ENCODE measurements at regions of chr12 and their contacts with region 1.

Region 1: DNA sequence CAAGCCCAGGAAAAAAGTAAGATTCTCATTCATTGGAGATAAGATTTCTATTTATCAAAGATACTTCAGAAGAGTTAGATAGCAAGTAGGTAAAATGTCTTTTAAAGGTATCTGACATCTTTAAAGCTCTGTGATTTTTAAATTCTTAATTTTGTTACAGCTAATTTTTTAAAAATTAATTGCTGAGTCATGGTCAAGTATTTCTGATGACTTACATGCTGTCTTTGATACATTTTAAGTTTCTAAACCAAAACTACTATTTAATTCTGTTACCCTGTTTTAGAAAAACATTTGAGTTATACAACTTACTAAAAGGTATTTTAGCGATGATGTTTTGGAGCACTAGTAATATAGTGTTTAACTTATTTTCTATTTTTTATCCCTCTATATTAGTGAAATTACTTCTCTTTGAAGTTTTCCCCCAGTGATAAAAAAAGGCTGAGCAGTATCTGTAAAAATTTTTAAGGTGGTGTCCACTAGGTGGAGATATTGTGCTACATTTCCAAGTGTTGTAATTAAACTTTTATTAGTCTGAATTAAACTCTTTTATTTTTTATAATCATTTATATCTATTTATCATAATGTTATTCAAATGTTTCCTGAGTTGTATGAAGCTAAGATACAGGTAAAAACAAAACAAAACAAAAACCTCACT is 11.5 kb downstream of the ALG10 start:
- DNase-seq: peak; percentile 12
- ATAC-seq: no peak
- H3K4me3 ChIP-seq: no peak overlapping the region
- H3K27ac ChIP-seq: no peak overlapping the region
- H3K4me1 ChIP-seq: no peaks in the 10 kb centered on the region
- H3K27me3 ChIP-seq: no peaks in the 10 kb centered on the region
- CTCF ChIP-seq: peak; percentile 26; the same call in 1 of the 2 replicates
- EP300 ChIP-seq: no peak
- POLR2A ChIP-seq: no peak
- RAD21 ChIP-seq: no peak

Region 2: GRCh38 chr12:34107781-34108404 is 74.1 kb after region 1 on chr12:
- CTCF ChIA-PET with region 1: no interaction called
- POLR2A ChIA-PET with region 1: no interaction called
- in situ Hi-C with region 1: no loop called
- intact Hi-C with region 1: no loop called
- DNase-seq: no peak
- ATAC-seq: peak; percentile 24; the same call in 2 of the 3 replicates
- H3K4me3 ChIP-seq: no peak overlapping the region
- H3K27ac ChIP-seq: no peak overlapping the region
- H3K4me1 ChIP-seq: no peaks in the 10 kb centered on the region
- H3K27me3 ChIP-seq: no peaks in the 10 kb centered on the region; a peak in 1 of 5 replicates
- CTCF ChIP-seq: no peak
- EP300 ChIP-seq: no peak
- POLR2A ChIP-seq: no peak
- RAD21 ChIP-seq: no peak

Region 3: DNA sequence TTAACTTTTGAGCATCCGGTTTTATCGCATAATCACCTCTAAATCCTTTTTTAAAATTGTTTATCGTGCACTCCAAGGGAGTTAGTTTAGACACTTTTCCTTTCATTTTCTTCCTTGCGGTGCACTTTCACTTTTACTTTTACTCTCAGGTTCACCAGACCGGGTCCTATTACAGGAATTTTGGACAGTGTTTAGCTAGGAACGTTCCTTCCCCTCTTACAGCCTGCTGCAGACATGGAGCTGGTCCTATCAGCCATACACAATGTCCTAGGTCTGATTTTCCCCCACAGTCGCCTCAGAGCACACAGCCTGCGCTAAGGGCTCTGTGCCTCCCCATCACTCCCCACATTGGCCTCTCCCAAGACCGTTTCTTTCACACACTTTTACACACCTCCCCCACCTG is 92.5 kb after region 1 on chr12:
- CTCF ChIA-PET with region 1: interaction called, 3 read pairs
- POLR2A ChIA-PET with region 1: no interaction called
- in situ Hi-C with region 1: no loop called
- intact Hi-C with region 1: loop called (anchors 2 kb)
- DNase-seq: peak; percentile 1
- ATAC-seq: peak; percentile 76
- H3K4me3 ChIP-seq: peak overlapping the region; percentile 44 to 62 (median 56)
- H3K27ac ChIP-seq: no peak overlapping the region
- H3K4me1 ChIP-seq: no peaks in the 10 kb centered on the region
- H3K27me3 ChIP-seq: no peaks in the 10 kb centered on the region
- CTCF ChIP-seq: no peak
- EP300 ChIP-seq: no peak
- POLR2A ChIP-seq: no peak
- RAD21 ChIP-seq: no peak

Region 4: DNA sequence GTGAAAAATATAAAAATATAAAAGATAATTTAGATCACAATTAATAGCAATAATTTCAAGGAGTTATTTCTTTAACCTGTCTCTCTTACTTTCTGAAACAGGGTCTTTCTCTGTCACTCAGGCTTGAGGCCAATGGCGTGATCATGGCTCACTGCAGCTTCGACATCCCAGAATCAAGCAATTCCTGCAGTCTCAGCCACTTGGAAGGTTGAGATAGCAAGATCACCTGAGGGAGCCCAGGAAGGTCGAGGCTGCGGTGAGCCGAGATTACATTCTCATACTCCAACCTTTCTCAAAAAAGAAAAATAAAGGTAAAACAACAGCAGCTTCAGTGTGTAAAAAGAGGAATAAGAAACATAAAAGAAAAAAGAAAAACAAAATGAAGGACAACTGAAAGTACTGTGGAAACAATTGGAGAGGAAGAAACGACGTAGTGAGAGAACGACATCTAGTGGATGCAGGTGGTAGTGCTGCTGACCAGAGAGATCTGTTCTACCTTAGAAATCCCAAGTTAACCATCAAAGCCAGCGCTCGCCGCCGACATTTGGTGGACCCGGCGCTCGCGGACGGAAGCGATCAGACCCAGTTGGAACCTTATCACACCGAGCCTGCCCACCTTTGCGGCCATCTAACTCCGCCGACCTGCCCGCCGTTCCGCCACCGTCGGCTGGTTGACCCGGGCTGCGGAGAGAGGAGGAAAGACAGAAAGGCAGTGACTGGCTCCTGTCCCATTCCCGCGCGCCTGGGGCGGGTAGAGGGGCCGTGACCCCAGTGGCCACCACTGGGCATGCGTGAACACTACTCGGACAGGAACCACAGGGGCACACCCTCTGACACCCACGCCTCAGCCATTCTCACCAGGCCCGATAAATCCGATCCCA is 184.7 kb after region 1 on chr12:
- CTCF ChIA-PET with region 1: interaction called, 18 read pairs
- POLR2A ChIA-PET with region 1: no interaction called
- in situ Hi-C with region 1: no loop called
- intact Hi-C with region 1: loop called (anchors 1 kb)
- DNase-seq: peak; percentile 64
- ATAC-seq: peak; percentile 90
- H3K4me3 ChIP-seq: peak overlapping the region; percentile 24 to 61 (median 32); a peak in 5 of 6 replicates
- H3K27ac ChIP-seq: no peak overlapping the region
- H3K4me1 ChIP-seq: no peaks in the 10 kb centered on the region
- H3K27me3 ChIP-seq: no peaks in the 10 kb centered on the region; a peak in 2 of 5 replicates
- CTCF ChIP-seq: peak; percentile 84
- EP300 ChIP-seq: no peak
- POLR2A ChIP-seq: no peak
- RAD21 ChIP-seq: peak; percentile 46; the same call in 1 of the 2 replicates

Region 5: GRCh38 chr12:34292736-34293625 is 259.2 kb after region 1 on chr12:
- CTCF ChIA-PET with region 1: no interaction called
- POLR2A ChIA-PET with region 1: no interaction called
- in situ Hi-C with region 1: no loop called
- intact Hi-C with region 1: loop called (anchors 2 kb)
- DNase-seq: peak; percentile 5
- ATAC-seq: peak; percentile 69
- H3K4me3 ChIP-seq: no peak overlapping the region
- H3K27ac ChIP-seq: no peak overlapping the region
- H3K4me1 ChIP-seq: no peaks in the 10 kb centered on the region
- H3K27me3 ChIP-seq: peaks cover 4 to 26% of the 10 kb centered on the region in 2 experiments; a peak in 2 of 5 replicates
- CTCF ChIP-seq: peak; percentile 43
- EP300 ChIP-seq: no peak
- POLR2A ChIP-seq: no peak
- RAD21 ChIP-seq: no peak

Region 6: DNA sequence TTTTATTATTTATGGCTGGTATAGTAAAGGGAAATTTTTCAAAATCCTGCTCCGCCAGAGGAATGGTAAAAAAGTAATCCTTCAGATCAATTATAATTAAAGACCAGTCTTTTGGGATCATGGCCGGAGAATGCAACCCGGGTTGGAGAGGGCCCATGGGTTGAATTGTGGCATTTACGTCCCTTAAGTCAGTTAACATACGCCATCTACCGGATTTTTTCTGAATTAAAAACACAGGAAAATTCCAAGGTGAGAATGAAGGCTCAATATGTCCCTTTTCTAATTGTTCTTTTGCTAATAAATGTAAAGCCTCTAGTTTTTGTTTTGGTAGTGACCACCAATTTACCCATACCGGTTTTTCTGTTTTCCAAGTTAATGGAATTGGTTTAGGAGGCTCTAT is 591.4 kb after region 1 on chr12:
- CTCF ChIA-PET with region 1: interaction called, 4 read pairs
- POLR2A ChIA-PET with region 1: no interaction called
- in situ Hi-C with region 1: loop called (anchors 10 kb)
- intact Hi-C with region 1: loop called (anchors 1 kb)
- DNase-seq: peak; percentile 29
- ATAC-seq: no peak
- H3K4me3 ChIP-seq: no peak overlapping the region
- H3K27ac ChIP-seq: no peak overlapping the region
- H3K4me1 ChIP-seq: no peaks in the 10 kb centered on the region
- H3K27me3 ChIP-seq: no peaks in the 10 kb centered on the region
- CTCF ChIP-seq: peak; percentile 53
- EP300 ChIP-seq: no peak
- POLR2A ChIP-seq: no peak
- RAD21 ChIP-seq: 0 out of 2 replicates have a peak, but pooled peaks have one; percentile 15